ENCODE measurements at regions of chr12 and their contacts with region 1.

Region 1: DNA sequence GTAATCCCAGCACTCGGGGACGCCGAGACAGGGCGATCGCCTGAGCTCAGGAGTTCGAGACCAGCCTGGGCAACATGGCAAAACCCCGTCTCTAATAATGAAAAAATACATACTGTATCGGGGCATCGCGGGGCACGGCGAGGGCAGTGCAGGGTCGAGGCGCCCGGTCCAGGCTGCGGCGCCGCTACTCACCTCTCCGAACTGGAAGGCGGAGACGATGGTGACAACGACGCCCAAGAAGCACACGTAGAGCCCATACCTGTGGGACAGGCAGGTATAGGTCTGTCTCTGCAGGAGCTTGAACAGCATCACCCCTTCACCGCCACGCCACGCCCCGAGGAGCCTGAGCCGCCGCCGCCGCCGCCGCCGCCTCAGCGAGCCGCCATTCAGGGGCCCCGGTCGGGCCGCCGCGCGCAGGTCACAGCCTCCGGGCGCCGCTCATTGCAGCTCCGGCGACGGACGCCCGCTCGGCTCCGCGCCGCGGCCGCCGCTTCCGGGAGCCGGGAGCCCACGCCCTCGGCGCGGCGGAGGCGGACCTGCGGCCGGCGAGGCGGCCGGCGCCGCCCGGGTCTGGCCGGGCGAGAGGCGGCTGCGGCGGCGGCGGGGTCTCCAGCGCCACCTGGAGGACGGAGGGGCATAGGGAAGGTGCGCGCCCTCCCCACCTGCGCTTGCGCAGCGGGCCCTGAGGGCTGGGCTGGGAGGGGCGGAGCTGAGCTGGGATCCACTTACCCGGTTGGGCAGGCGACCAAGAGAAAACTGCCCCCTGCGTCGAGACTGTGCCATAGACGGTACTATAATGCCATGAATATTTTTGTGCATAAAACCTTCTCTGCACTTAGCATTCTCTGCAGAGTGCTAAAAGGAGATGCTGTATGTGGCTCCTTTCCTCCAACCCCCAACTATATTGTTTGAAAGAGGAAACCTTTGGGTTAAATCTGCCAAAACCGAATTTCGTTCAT is at the start of gene GNPTAB:
- DNase-seq: peak; percentile 92 to 96
- ATAC-seq: peak; percentile 94 to 99 (median 98)
- H3K4me3 ChIP-seq: peak within 1 kb of the TSS; percentile 79
- H3K27ac ChIP-seq: peak within 1 kb of the TSS; percentile 90
- H3K4me1 ChIP-seq: peaks cover 18% of the 10 kb centered on the region
- H3K27me3 ChIP-seq: no peaks in the 10 kb centered on the region
- CTCF ChIP-seq: peak; percentile 81
- total RNA-seq, gene GNPTAB: 14.3 to 36.1 (median 19.9) TPM

Region 2: GRCh38 chr12:101414533-101415119 is 416.0 kb before region 1 on chr12:
- intact Hi-C with region 1: loop called in 1 of 2 experiments (anchors 10 kb)
- DNase-seq: no peak
- ATAC-seq: peak in 3 of 4 donors; percentile 48 to 83 (median 59)
- H3K4me3 ChIP-seq: no peak overlapping the region
- H3K27ac ChIP-seq: no peak overlapping the region
- H3K4me1 ChIP-seq: no peaks in the 10 kb centered on the region
- H3K27me3 ChIP-seq: no peaks in the 10 kb centered on the region
- CTCF ChIP-seq: peak; percentile 63

Region 3: GRCh38 chr12:101527682-101528081 is 303.0 kb before region 1 on chr12:
- intact Hi-C with region 1: no loop called
- DNase-seq: peak; percentile 19 to 78
- ATAC-seq: peak; percentile 88 to 94 (median 92)
- H3K4me3 ChIP-seq: peak overlapping the region; percentile 35
- H3K27ac ChIP-seq: peak overlapping the region; percentile 79
- H3K4me1 ChIP-seq: peaks cover 8% of the 10 kb centered on the region
- H3K27me3 ChIP-seq: no peaks in the 10 kb centered on the region
- CTCF ChIP-seq: no peak

Region 4: DNA sequence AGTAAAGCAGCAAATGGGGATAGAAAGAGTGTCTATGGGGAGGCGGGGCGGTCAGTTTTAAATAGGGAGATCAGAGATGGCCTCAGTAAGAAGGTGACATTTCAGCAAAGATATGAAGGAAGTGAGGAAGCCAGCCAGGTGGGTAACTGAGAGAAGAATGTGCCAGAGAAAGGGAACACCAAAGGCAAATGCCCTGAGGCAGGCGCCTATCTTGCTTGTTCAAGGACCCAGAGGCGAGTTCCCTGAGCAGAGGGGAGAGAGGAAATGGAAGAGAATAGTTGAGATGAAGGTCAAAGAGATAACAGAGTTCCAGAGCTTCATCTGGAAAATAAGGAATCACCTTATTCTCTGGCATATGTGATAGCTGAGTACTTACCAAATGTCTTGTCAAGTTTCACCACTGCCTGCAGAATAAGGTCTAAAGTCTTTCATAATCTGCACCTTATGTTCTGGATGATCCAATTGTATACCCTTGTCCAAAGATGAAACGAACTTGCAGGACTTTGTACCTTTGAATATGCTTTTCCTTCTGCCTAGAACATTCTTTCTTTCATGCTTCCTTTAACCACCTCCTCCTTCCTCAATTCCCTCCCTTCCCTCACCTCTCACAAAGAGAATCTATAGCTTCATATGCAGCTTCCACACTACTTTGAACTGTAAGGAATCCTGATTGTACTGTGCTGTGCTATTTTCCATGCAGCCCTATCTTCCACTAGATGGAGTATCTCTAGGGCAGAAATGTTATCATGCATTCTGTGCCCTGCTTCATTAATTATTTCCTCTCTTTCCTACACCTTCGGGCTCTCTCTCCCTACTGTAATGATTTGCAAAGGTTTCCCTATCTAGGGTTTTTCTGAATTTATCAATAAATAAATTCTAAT is 38.4 kb before region 1 on chr12:
- intact Hi-C with region 1: loop called in 1 of 2 experiments (anchors 5 kb)
- DNase-seq: no peak
- ATAC-seq: peak; percentile 71 to 92 (median 79)
- H3K4me3 ChIP-seq: no peak overlapping the region
- H3K27ac ChIP-seq: peak overlapping the region; percentile 58
- H3K4me1 ChIP-seq: peaks cover 16% of the 10 kb centered on the region
- H3K27me3 ChIP-seq: no peaks in the 10 kb centered on the region
- CTCF ChIP-seq: peak; percentile 61

Measured in psoas muscle (tissue), 8 donors.